ENCODE measurements at regions of chr13 and their contacts with region 1.

Region 1: GRCh38 chr13:77751513-77752456 is 54.3 kb downstream of the SLAIN1 start:
- DNase-seq: peak; percentile 67
- ATAC-seq: peak; percentile 80
- H3K4me3 Mint-ChIP-seq: no peak overlapping the region
- H3K27ac Mint-ChIP-seq: peak overlapping the region; percentile 12
- H3K4me1 Mint-ChIP-seq: peaks cover 11% of the 10 kb centered on the region
- H3K27me3 Mint-ChIP-seq: no peaks in the 10 kb centered on the region

Region 2: GRCh38 chr13:77595166-77595810 is 156.5 kb before region 1 on chr13:
- CTCF ChIA-PET with region 1: interaction called, 54 read pairs
- POLR2A ChIA-PET with region 1: no interaction called
- DNase-seq: no peak
- ATAC-seq: no peak
- H3K4me3 Mint-ChIP-seq: no peak overlapping the region
- H3K27ac Mint-ChIP-seq: no peak overlapping the region
- H3K4me1 Mint-ChIP-seq: no peaks in the 10 kb centered on the region
- H3K27me3 Mint-ChIP-seq: peaks cover 19% of the 10 kb centered on the region

Region 3: GRCh38 chr13:77692746-77693448 is 58.9 kb before region 1 on chr13:
- CTCF ChIA-PET with region 1: interaction called, 14 read pairs
- POLR2A ChIA-PET with region 1: interaction called, 3 read pairs
- DNase-seq: no peak
- ATAC-seq: no peak
- H3K4me3 Mint-ChIP-seq: no peak overlapping the region
- H3K27ac Mint-ChIP-seq: no peak overlapping the region
- H3K4me1 Mint-ChIP-seq: peaks cover 15% of the 10 kb centered on the region
- H3K27me3 Mint-ChIP-seq: peaks cover 30% of the 10 kb centered on the region